ENCODE measurements at regions of chr3 and their contacts with region 1.

Region 1: GRCh38 chr3:71305231-71306206 is 278.0 kb downstream of the FOXP1 start:
- DNase-seq: peak in 4 of 5 donors; percentile 37 to 49 (median 45)
- ATAC-seq: peak; percentile 82 to 94 (median 86)
- H3K4me3 ChIP-seq: peak overlapping the region in 11 of 12 donors; percentile 2 to 51 (median 45)
- H3K27ac ChIP-seq: peak overlapping the region; percentile 45 to 82 (median 72)
- H3K4me1 ChIP-seq: peaks cover 0 to 48% (median 26%) of the 10 kb centered on the region in 12 donors
- H3K27me3 ChIP-seq: no peaks in the 10 kb centered on the region
- CTCF ChIP-seq: no peak
- POLR2A ChIP-seq: no peak

Region 2: DNA sequence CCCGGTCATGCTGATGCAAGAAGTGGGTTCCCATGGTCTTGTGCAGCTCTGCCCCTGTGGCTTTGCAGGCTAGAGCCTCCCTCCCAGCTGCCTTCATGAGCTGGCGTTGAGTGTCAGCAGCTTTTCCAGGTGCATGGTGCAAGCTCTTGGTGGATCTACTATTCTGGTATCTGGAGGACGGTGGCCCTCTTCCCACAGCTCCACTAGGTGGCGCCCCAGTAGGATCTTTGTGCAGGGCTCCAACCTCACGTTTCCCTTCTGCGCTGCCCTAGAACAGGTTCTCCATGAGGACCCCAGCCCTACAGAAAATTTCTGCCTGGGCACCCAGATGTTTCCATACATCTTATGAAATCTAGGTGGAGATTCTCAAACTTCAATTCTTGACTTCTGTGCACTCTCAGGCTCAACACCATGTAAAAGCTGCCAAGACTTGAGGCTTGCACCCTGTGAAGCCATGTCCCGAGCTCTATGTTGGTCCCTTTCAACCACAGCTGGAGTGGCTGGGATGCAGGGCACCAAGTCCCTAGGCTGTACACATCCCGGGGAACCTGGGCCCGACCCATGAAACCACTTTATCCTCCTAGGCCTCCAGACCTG is 754.7 kb before region 1 on chr3:
- intact Hi-C with region 1: loop called in 3 of 10 experiments (anchors 1 to 10 kb)
- DNase-seq: peak; percentile 55 to 79 (median 66)
- ATAC-seq: peak in 3 of 4 donors; percentile 85 to 87 (median 85)
- H3K4me3 ChIP-seq: no peak overlapping the region
- H3K27ac ChIP-seq: no peak overlapping the region
- H3K4me1 ChIP-seq: no peaks in the 10 kb centered on the region
- H3K27me3 ChIP-seq: no peaks in the 10 kb centered on the region
- CTCF ChIP-seq: peak; percentile 67 to 88 (median 78)
- POLR2A ChIP-seq: no peak

Region 3: GRCh38 chr3:71006810-71007785 is 298.4 kb before region 1 on chr3:
- intact Hi-C with region 1: loop called in 5 of 10 experiments (anchors 2 to 10 kb)
- DNase-seq: no peak
- ATAC-seq: peak in 3 of 4 donors; percentile 22 to 69 (median 65)
- H3K4me3 ChIP-seq: no peak overlapping the region
- H3K27ac ChIP-seq: peak overlapping the region in 10 of 12 donors; percentile 4 to 55 (median 32)
- H3K4me1 ChIP-seq: peaks cover 0 to 78% (median 39%) of the 10 kb centered on the region in 12 donors
- H3K27me3 ChIP-seq: no peaks in the 10 kb centered on the region
- CTCF ChIP-seq: peak in 11 of 12 donors; percentile 38 to 72 (median 55)
- POLR2A ChIP-seq: no peak

Region 4: DNA sequence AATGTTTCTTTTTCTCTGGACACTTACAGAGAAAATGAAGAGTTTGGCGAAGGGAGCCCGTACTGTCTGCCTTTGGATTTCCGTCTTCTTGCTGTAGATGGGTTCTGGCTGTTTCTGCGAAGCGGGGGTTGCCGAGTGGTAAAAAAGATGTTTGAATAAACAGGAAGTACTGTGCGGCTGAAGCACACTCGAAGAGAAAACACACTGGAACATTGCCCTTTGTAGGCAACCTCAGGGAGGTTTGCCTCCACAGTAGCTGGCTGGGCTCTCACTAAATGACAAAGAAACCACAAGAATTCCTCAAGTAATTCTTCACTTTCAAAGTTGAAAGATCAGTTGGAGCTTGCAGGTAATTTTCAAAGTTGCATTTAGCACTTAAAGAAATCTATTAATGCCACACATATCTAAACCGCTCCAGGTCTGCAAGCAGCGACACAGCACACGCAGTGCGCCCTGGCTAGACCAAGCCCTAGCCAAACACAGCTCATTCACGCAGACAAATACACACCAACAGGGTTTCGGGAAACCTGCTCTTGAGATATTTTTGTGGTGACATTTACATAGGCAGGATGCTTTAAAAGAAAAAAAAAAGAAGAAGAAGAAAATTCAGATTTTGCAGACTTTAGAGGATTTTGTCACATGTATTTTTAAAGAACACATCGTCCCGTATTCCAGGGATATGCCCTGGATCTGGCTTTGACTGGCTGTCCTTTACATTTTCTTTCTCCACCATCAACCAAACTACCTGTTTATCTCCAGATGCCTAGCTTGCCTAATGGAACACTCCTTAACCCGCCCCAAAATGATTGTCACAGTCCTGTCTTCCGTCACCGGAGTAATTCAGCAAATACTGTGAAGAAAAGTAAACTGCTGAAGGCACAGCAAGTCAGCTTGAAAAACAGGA is 174.8 kb before region 1 on chr3:
- intact Hi-C with region 1: loop called in 2 of 10 experiments (anchors 5 to 10 kb)
- DNase-seq: peak; percentile 60 to 74 (median 70)
- ATAC-seq: peak; percentile 59 to 76 (median 70)
- H3K4me3 ChIP-seq: peak overlapping the region; percentile 36 to 67 (median 55)
- H3K27ac ChIP-seq: peak overlapping the region; percentile 78 to 94 (median 88)
- H3K4me1 ChIP-seq: peaks cover 3 to 80% (median 54%) of the 10 kb centered on the region in 12 donors
- H3K27me3 ChIP-seq: no peaks in the 10 kb centered on the region
- CTCF ChIP-seq: no peak
- POLR2A ChIP-seq: peak in 1 of 2 donors; percentile 43

Region 5: DNA sequence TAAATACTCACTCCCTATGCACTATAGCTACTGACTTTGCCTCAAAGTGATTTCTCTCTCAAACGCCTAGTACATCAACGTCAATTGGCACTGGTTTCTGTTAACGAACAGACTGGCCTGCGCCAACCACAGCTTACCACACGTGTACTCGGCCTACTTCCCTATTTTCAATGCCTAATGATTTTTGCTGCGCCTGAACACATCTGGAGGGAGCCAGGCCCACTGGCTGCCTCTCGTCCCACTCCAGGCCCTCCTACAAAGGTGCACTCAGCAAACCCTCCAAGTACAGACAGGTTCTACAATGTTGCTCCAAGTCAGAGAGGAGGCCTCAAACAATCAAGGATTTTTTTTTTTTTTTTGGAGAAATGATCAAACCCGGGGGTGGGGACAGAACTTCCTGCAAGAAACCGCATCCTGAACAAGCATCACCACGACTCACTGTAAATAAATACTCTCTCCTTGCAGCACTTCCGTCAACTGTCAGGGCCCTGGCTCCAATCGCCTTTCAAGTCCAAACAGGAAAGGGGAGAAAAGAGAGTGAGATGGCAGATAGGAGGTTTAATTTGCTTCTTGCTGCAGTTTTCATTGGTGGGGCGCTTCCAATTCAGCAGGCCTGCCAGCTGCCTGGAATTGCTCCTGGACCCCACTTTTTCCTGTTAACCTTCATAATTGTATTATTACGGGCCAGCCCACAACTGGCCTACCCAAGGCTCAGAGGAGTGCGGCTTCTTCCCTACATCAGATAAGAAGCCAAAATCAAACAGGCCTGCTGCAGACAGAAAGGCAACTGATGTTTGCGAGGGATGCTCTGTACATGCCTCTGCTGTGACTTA is 138.7 kb after region 1 on chr3:
- intact Hi-C with region 1: no loop called
- DNase-seq: peak; percentile 42 to 67 (median 58)
- ATAC-seq: peak; percentile 28 to 81 (median 68)
- H3K4me3 ChIP-seq: peak overlapping the region in 1 of 12 donors; percentile 21
- H3K27ac ChIP-seq: peak overlapping the region; percentile 3 to 92 (median 66)
- H3K4me1 ChIP-seq: peaks cover 0 to 90% (median 39%) of the 10 kb centered on the region in 12 donors
- H3K27me3 ChIP-seq: no peaks in the 10 kb centered on the region
- CTCF ChIP-seq: no peak
- POLR2A ChIP-seq: no peak

Measured in heart left ventricle (tissue), 16 donors.